CD4-positive, alpha-beta T cell (primary cell): ENCODE measurements at regions of chr7 and their contacts with region 1.

Region 1: DNA sequence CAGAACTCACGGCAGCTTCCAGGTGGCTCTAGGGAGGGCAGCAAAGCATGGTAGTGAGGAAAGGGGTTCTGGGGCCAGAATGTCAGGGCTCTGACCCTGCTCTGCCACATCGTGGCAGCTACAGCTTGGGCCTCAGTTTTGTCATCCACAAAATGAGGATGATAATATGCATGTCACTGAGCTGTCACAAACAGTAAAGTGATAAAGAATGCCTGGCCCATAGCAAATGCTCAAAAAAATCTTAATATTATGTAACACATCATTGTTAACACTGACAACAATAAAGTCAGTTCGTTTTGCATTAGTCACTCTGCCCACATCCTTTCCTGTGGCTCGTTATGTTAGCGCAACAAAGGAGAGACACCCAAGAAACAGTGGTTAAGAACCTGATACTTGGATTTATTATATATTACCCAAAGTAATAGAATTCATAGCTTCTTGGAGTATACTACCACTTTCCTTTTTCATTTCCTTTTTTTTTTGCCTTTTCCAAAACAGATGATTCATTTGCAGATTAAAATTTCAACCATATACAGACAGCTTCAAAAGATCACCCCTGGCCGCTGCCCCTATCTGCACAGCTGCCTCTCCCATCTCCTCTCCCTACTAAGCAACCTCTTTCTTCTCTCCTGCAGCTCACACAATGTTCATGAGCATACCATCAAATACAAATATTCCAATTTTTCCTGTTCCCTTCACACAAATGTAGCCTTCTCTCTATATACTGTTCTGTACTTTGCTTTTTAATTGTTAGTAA is 45.5 kb upstream of the DDC start:
- DNase-seq: peak in 10 of 14 experiments; percentile 16 to 90 (median 48)
- ATAC-seq: peak; percentile 87
- H3K4me3 ChIP-seq: no peak overlapping the region
- H3K4me3 Mint-ChIP-seq: no peak overlapping the region
- H3K27ac ChIP-seq: peak overlapping the region in 1 of 2 donors; percentile 28
- H3K27ac Mint-ChIP-seq: peak overlapping the region; percentile 65
- H3K4me1 ChIP-seq: peaks cover 43% of the 10 kb centered on the region
- H3K4me1 Mint-ChIP-seq: peaks cover 34% of the 10 kb centered on the region
- H3K27me3 ChIP-seq: no peaks in the 10 kb centered on the region
- H3K27me3 Mint-ChIP-seq: no peaks in the 10 kb centered on the region
- CTCF ChIP-seq: no peak

Region 2: GRCh38 chr7:51067757-51068156 is 457.1 kb after region 1 on chr7:
- CTCF ChIA-PET with region 1: no interaction called
- POLR2A ChIA-PET with region 1: no interaction called
- intact Hi-C with region 1: loop called in 1 of 2 experiments (anchors 10 kb)
- DNase-seq: peak; percentile 7 to 66 (median 32)
- ATAC-seq: no peak
- H3K4me3 ChIP-seq: no peak overlapping the region
- H3K4me3 Mint-ChIP-seq: no peak overlapping the region
- H3K27ac ChIP-seq: no peak overlapping the region
- H3K27ac Mint-ChIP-seq: no peak overlapping the region
- H3K4me1 ChIP-seq: no peaks in the 10 kb centered on the region
- H3K4me1 Mint-ChIP-seq: no peaks in the 10 kb centered on the region
- H3K27me3 ChIP-seq: no peaks in the 10 kb centered on the region
- H3K27me3 Mint-ChIP-seq: no peaks in the 10 kb centered on the region
- CTCF ChIP-seq: peak; percentile 62